ENCODE measurements at regions of chr2 and their contacts with region 1.

Region 1: GRCh38 chr2:190781604-190782198 is 98.9 kb upstream of the GLS start:
- DNase-seq: no peak
- H3K4me3 ChIP-seq: no peak overlapping the region
- H3K27ac ChIP-seq: no peak overlapping the region
- H3K4me1 ChIP-seq: peaks cover 0 to 8% (median 3%) of the 10 kb centered on the region in 4 donors
- H3K27me3 ChIP-seq: no peaks in the 10 kb centered on the region
- CTCF ChIP-seq: peak; percentile 53 to 55

Region 2: DNA sequence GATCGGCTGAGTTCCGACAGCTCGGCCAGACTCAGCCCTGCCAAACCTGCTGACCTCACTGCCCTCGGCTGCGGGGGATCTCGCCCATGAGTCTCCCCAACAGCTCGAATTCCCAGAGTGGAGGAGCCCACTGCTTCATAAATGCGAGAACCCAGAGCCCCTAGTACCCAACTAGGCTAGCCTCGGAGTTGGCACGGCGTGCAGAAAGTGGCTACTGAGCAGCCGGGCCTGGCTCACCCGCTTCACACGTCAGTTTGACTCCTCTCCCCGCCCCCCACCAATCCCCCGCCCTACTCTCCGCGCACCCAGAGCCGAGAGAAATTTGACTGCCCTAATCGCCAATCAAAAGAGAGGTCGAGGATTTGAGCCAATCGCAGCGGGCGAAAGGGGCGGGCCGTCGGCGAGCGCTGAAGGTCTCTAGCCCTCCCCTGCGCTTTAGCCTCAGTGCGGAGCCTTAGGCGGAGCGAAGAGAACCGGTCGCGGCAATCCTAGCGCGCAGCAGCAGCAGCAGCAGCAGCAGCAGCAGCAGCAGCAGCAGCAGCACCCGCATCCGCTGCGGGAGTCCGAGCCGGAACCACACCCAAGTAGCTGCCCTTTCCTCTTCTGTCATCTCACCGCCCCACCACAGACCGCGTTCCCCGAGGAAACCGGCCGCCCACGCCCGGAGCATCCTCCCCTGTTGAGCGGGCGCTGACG is 98.8 kb after region 1 on chr2 and contains the start of gene GLS:
- intact Hi-C with region 1: no loop called
- DNase-seq: peak; percentile 96 to 99
- H3K4me3 ChIP-seq: peak within 1 kb of the TSS; percentile 83 to 91
- H3K27ac ChIP-seq: peak within 1 kb of the TSS; percentile 95 to 97
- H3K4me1 ChIP-seq: peaks cover 0 to 50% (median 3%) of the 10 kb centered on the region in 4 donors
- H3K27me3 ChIP-seq: no peaks in the 10 kb centered on the region
- CTCF ChIP-seq: no peak

Region 3: GRCh38 chr2:191029280-191029950 is 247.7 kb after region 1 on chr2:
- intact Hi-C with region 1: loop called (anchors 2 kb)
- DNase-seq: no peak
- H3K4me3 ChIP-seq: no peak overlapping the region
- H3K27ac ChIP-seq: no peak overlapping the region
- H3K4me1 ChIP-seq: peaks cover 0 to 5% (median 2%) of the 10 kb centered on the region in 4 donors
- H3K27me3 ChIP-seq: no peaks in the 10 kb centered on the region
- CTCF ChIP-seq: no peak

Measured in tibial artery (tissue), 4 donors.